Activated CD4-positive, alpha-beta T cell treated with anti-CD3 and anti-CD28 coated beads for 36 hours (primary cell): ENCODE measurements at regions of chr11 and their contacts with region 1.

Region 1: GRCh38 chr11:11787305-11788062 is 54.3 kb upstream of the USP47 start:
- DNase-seq: peak; percentile 82
- ATAC-seq: peak; percentile 90
- H3K4me3 Mint-ChIP-seq: no peak overlapping the region
- H3K27ac Mint-ChIP-seq: no peak overlapping the region
- H3K4me1 Mint-ChIP-seq: no peaks in the 10 kb centered on the region
- H3K27me3 Mint-ChIP-seq: peaks cover 2% of the 10 kb centered on the region

Region 2: DNA sequence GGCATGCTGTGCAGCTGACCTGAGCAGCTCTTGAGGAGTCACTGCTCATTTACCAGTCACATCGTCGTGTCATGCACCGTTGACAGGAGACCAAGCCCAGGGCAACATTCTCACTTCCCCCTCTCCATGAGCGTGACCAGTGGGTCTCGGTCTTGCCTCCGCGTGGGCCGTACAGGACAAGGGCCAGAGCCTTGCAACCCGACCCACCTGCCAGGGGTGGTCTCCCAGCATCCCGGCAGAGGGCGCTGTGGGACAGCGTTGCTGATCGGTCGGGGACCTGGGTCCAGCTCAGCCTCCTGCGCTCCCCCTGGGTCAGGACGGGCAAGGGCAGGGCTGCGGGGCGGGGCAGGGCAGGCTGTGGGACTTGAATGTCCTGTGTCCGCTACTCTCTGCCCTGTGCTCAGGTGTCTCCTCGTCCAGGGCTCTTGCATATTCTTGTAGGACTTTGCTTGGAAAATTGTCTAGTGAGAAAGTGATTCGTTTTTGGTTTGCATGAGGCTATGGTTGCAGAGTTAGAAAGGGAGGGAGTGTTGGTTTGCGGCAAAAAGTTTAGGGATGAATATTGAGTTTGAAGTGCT is 995.0 kb before region 1 on chr11:
- CTCF ChIA-PET with region 1: interaction called, 10 read pairs
- POLR2A ChIA-PET with region 1: no interaction called
- intact Hi-C with region 1: loop called (anchors 2 to 5 kb)
- DNase-seq: peak; percentile 93
- ATAC-seq: peak; percentile 96
- H3K4me3 Mint-ChIP-seq: no peak overlapping the region
- H3K27ac Mint-ChIP-seq: no peak overlapping the region
- H3K4me1 Mint-ChIP-seq: peaks cover 21% of the 10 kb centered on the region
- H3K27me3 Mint-ChIP-seq: peaks cover 3% of the 10 kb centered on the region

Region 3: DNA sequence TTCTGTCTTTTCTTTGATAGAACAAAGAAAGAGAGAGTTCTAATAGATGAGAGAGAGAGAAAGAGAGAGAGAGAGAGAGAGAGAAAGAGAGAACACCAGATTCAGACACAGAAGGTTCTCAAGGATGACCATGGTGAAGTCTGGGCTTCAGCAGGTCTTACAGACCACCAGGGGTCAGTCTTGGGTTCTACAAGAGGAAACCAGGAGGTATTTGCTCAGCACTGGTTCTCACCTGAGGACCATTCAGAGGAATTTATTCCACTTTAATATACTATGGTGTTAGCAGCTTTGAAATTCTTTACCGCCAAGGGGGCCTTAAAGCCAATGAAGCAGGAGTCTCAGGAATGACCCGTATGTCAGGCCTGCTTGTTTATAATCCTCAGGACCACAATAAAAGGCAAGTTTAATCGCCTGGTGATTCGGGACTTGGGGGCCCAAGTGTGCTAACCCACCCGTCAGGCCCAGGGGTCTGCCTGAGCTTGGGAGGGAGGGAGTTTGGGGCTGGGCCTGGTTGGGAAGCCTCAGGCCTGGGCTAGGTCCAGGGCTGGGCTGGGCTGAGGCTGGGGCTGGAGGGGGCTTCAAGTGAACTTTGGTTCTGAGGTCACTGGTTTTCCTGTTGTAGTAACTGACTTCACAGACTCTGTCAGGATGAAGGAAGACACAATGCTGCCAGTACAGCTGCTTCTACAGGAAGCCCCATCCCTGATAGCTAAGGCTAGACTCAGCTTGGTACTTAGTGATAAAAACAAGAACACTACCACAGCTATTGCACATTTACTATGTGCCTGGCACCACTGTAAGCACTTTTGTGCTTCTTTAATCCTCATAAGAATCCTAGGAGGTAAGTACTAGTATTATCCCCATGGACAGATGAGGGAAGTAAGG is 750.4 kb before region 1 on chr11:
- CTCF ChIA-PET with region 1: interaction called, 35 read pairs
- POLR2A ChIA-PET with region 1: no interaction called
- intact Hi-C with region 1: loop called in 1 of 2 experiments (anchors 1 kb)
- DNase-seq: peak; percentile 42
- ATAC-seq: peak; percentile 74
- H3K4me3 Mint-ChIP-seq: no peak overlapping the region
- H3K27ac Mint-ChIP-seq: no peak overlapping the region
- H3K4me1 Mint-ChIP-seq: peaks cover 10% of the 10 kb centered on the region
- H3K27me3 Mint-ChIP-seq: no peaks in the 10 kb centered on the region

Region 4: DNA sequence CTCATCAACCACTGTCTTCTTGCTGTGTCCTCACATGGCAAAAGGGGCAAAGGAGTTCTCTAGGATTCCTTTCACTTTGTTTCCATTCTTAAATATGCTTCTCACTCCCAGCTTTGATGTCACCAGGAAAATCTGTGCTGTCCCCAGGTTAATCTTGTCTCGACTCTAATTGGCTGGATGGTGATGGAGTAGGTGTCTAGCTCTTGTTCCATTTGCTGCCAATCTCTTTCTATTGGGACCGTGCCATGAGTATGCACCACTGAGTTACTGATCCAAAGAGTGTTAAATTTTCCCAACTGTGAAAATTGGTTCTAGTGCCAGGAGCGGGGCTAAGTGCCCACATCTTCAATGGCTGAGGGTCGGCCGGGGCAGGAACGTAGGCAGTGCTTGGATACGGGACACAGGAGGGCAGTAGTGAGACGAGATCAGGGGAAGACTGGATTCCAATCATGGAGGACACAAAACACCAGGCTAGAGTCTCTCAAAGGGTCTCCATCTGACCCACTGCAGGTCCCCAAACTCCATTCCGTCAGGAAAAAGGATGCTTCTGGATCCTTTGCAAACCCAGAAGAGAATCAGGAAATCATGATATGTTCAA is 386.8 kb before region 1 on chr11:
- CTCF ChIA-PET with region 1: no interaction called
- POLR2A ChIA-PET with region 1: no interaction called
- intact Hi-C with region 1: loop called in 1 of 2 experiments (anchors 1 kb)
- DNase-seq: peak; percentile 20
- ATAC-seq: no peak
- H3K4me3 Mint-ChIP-seq: no peak overlapping the region
- H3K27ac Mint-ChIP-seq: no peak overlapping the region
- H3K4me1 Mint-ChIP-seq: no peaks in the 10 kb centered on the region
- H3K27me3 Mint-ChIP-seq: peaks cover 10% of the 10 kb centered on the region

Region 5: DNA sequence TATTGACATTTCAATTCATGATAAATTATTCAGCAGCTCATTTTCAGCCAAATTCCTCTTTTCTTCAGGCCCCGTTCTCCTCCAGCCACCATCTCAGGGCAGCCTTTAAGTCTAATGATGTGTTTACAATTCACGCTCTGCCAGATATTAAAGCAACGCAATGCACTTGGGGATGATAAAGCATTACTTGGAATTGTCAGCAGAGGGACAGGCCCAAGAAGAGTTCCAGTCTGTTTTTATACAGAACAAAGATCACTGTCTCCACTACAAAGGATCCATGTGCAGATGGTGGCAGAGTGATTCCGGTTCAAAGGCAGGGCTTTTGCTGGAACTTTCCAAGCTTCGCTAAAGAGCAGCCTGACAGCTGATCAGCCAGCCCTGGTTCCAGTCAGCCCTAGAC is 152.0 kb before region 1 on chr11:
- CTCF ChIA-PET with region 1: no interaction called
- POLR2A ChIA-PET with region 1: no interaction called
- intact Hi-C with region 1: no loop called
- DNase-seq: no peak
- ATAC-seq: no peak
- H3K4me3 Mint-ChIP-seq: no peak overlapping the region
- H3K27ac Mint-ChIP-seq: no peak overlapping the region
- H3K4me1 Mint-ChIP-seq: no peaks in the 10 kb centered on the region
- H3K27me3 Mint-ChIP-seq: peaks cover 3% of the 10 kb centered on the region

Region 6: GRCh38 chr11:11798586-11799438 is 11.3 kb after region 1 on chr11:
- CTCF ChIA-PET with region 1: interaction called, 10 read pairs
- POLR2A ChIA-PET with region 1: no interaction called
- intact Hi-C with region 1: no loop called
- DNase-seq: peak; percentile 89
- ATAC-seq: peak; percentile 93
- H3K4me3 Mint-ChIP-seq: no peak overlapping the region
- H3K27ac Mint-ChIP-seq: no peak overlapping the region
- H3K4me1 Mint-ChIP-seq: no peaks in the 10 kb centered on the region
- H3K27me3 Mint-ChIP-seq: peaks cover 21% of the 10 kb centered on the region

Region 7: DNA sequence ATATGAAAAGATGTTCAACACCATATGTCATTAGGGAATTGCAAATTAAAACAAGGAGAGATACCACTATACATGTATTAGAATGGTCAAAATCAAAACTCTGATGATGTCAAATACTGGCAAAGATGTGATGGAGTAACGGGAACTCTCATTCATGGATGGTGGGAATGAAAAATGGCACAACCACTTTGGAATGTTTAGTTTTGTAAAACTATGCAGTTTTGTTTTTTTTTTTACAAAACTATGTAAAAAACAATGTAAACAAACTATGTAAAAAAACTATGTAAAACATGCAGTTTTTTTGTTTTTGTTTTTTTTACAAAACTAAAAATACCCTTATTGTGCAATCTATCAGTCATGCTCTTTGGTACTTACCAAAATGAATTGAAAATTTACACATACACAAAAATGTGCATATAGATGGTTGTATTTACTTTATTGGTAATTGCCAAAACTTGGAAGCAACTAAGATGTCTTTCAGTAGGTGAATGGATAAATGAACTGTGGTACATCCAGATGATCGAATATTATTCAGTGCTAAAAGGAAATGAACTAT is 49.3 kb after region 1 on chr11:
- CTCF ChIA-PET with region 1: no interaction called
- POLR2A ChIA-PET with region 1: no interaction called
- intact Hi-C with region 1: no loop called
- DNase-seq: no peak
- ATAC-seq: no peak
- H3K4me3 Mint-ChIP-seq: no peak overlapping the region
- H3K27ac Mint-ChIP-seq: no peak overlapping the region
- H3K4me1 Mint-ChIP-seq: peaks cover 3% of the 10 kb centered on the region
- H3K27me3 Mint-ChIP-seq: peaks cover 14% of the 10 kb centered on the region

Region 8: DNA sequence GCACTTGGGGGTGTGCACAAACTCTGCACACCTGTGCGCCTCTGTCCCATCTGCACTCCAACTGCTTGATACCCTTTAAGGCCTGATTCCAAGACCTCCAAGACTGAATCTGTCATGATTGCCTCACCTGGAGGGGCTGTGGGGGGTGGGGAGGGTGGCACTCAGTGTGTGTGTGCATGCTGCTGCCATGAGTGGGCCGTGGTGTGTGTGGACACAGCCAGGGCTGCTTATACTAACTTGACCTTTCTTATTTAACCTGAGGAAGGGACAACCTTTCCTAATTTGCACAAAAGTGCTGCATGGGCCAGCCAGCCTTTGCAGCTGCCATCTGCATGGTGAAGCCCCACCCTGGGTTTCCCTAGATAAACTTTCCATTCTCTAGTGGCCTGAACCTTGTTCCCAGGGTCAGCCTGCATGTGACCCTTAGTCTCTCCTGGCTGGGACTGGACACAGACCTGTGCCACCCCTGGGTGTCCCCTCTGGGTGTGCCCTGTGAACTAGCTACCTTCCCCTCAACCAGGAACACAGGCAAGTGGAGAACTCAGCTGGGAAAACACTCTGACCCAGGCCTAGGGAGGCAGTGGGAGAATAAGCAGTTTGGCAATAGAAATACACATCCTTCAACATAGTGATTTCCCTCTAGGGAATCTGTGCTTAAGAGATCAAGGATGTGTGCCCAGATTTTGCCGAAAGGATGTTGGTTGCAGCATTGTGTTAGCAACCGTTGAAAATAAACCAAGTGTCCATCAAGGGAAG is 266.3 kb after region 1 on chr11:
- CTCF ChIA-PET with region 1: no interaction called
- POLR2A ChIA-PET with region 1: no interaction called
- intact Hi-C with region 1: no loop called
- DNase-seq: no peak
- ATAC-seq: no peak
- H3K4me3 Mint-ChIP-seq: no peak overlapping the region
- H3K27ac Mint-ChIP-seq: no peak overlapping the region
- H3K4me1 Mint-ChIP-seq: peaks cover 3% of the 10 kb centered on the region
- H3K27me3 Mint-ChIP-seq: no peaks in the 10 kb centered on the region